IMR-90 (cell line): ENCODE measurements at regions of chr14 and their contacts with region 1.

Region 1: GRCh38 chr14:32121948-32122347 is 44.8 kb downstream of the ARHGAP5 start:
- DNase-seq: peak; percentile 25
- ATAC-seq: peak; percentile 53
- H3K4me3 ChIP-seq: no peak overlapping the region
- H3K27ac ChIP-seq: no peak overlapping the region
- H3K4me1 ChIP-seq: 0 out of 2 replicates have a peak, but pooled peaks cover 2% of the 10 kb centered on the region
- H3K27me3 ChIP-seq: no peaks in the 10 kb centered on the region
- CTCF ChIP-seq: no peak
- POLR2A ChIP-seq: no peak
- RAD21 ChIP-seq: no peak

Region 2: DNA sequence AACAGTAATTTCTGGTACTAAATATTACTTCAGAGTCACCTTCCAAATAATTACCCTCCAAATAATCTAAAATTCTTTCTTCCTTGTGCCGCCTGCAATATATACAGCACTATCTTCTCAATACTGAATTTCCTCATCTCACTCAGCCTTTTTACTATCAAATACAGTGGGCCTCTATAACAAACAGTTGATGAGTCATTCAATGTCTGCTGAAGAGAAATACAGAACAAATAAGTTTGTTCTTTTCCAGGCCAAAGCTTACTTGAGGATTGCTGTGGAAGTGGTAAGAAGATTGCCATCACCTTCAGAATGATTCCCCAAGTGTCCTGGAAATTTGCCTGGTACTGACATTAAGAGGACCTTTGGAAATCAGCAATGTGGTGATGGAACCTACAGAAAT is 263.1 kb before region 1 on chr14:
- CTCF ChIA-PET with region 1: no interaction called
- POLR2A ChIA-PET with region 1: no interaction called
- dilution Hi-C with region 1: no loop called
- in situ Hi-C with region 1: no loop called
- intact Hi-C with region 1: no loop called
- DNase-seq: peak; percentile 56
- ATAC-seq: peak; percentile 75
- H3K4me3 ChIP-seq: no peak overlapping the region
- H3K27ac ChIP-seq: no peak overlapping the region
- H3K4me1 ChIP-seq: no peaks in the 10 kb centered on the region
- H3K27me3 ChIP-seq: no peaks in the 10 kb centered on the region
- CTCF ChIP-seq: no peak
- POLR2A ChIP-seq: no peak
- RAD21 ChIP-seq: no peak

Region 3: GRCh38 chr14:32087173-32087861 is 34.6 kb before region 1 on chr14:
- CTCF ChIA-PET with region 1: no interaction called
- POLR2A ChIA-PET with region 1: no interaction called
- dilution Hi-C with region 1: no loop called
- in situ Hi-C with region 1: no loop called
- intact Hi-C with region 1: loop called (anchors 5 kb)
- DNase-seq: peak; percentile 43
- ATAC-seq: no peak
- H3K4me3 ChIP-seq: no peak overlapping the region
- H3K27ac ChIP-seq: no peak overlapping the region
- H3K4me1 ChIP-seq: peaks cover 4% of the 10 kb centered on the region
- H3K27me3 ChIP-seq: no peaks in the 10 kb centered on the region
- CTCF ChIP-seq: no peak
- POLR2A ChIP-seq: no peak
- RAD21 ChIP-seq: no peak